IMR-90 (cell line): ENCODE measurements at regions of chr22 and their contacts with region 1.

Region 1: GRCh38 chr22:48492366-48493320 is 1335.0 kb downstream of the BRD1 start:
- DNase-seq: peak; percentile 57
- ATAC-seq: peak; percentile 92
- H3K4me3 ChIP-seq: no peak overlapping the region
- H3K27ac ChIP-seq: no peak overlapping the region
- H3K4me1 ChIP-seq: no peaks in the 10 kb centered on the region
- H3K27me3 ChIP-seq: peaks cover 24% of the 10 kb centered on the region; the same call in 1 of the 2 replicates
- CTCF ChIP-seq: peak; percentile 83
- POLR2A ChIP-seq: no peak
- RAD21 ChIP-seq: peak; percentile 85

Region 2: GRCh38 chr22:46563381-46564083 is 1929.1 kb before region 1 on chr22:
- CTCF ChIA-PET with region 1: no interaction called
- POLR2A ChIA-PET with region 1: no interaction called
- dilution Hi-C with region 1: no loop called
- in situ Hi-C with region 1: loop called (anchors 10 kb)
- intact Hi-C with region 1: no loop called
- DNase-seq: peak; percentile 37
- ATAC-seq: peak; percentile 88
- H3K4me3 ChIP-seq: no peak overlapping the region
- H3K27ac ChIP-seq: no peak overlapping the region
- H3K4me1 ChIP-seq: peaks cover 5% of the 10 kb centered on the region; the same call in 1 of the 2 replicates
- H3K27me3 ChIP-seq: peaks cover 1% of the 10 kb centered on the region; the same call in 1 of the 2 replicates
- CTCF ChIP-seq: peak; percentile 70
- POLR2A ChIP-seq: no peak
- RAD21 ChIP-seq: peak; percentile 72

Region 3: DNA sequence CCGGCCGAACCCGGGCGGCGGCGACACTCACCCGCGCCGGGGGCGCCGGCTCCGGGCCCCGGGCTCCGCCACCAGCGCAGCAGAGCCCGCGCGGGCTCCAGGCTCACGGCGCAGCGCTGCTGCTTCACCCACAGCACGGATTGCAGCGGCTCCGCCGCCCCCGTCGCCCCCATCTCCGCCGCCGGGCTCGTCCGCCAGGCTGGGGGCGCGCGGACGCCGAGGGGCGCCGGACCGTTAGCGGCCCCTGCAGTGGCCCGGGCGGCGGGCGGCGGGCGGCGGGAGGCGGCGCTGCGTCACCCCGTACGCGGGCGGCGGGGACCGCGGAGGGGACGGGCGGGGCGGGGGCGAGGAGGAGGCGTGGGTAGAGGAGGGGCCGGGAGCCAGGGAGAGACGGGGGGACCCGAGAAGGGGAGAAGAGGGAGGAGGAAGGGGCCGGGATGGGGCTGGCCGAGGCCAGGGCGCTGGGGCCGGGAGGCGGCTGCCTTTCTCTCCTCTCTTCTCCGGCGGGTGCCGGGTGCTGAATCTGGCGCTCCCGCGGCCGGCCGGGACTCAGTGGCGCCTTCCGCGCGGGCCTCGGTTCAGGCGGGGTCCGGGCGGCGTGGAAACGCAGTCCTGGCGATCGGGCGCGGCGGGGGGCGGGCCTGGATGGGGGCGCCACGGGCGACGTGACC is 1754.5 kb before region 1 on chr22 and contains the start of gene CERK:
- CTCF ChIA-PET with region 1: no interaction called
- POLR2A ChIA-PET with region 1: no interaction called
- dilution Hi-C with region 1: no loop called
- in situ Hi-C with region 1: no loop called
- intact Hi-C with region 1: loop called (anchors 5 kb)
- DNase-seq: peak; percentile 62
- ATAC-seq: peak; percentile 89
- H3K4me3 ChIP-seq: peak within 1 kb of the TSS; percentile 94
- H3K27ac ChIP-seq: peak within 1 kb of the TSS; percentile 55
- H3K4me1 ChIP-seq: peaks cover 31% of the 10 kb centered on the region
- H3K27me3 ChIP-seq: no peaks in the 10 kb centered on the region
- CTCF ChIP-seq: no peak
- POLR2A ChIP-seq: peak; percentile 63
- RAD21 ChIP-seq: no peak
- total RNA-seq, gene CERK: 38.7 and 44.4 TPM in 2 replicates

Region 4: GRCh38 chr22:46798366-46799350 is 1694.0 kb before region 1 on chr22:
- CTCF ChIA-PET with region 1: interaction called, 4 read pairs
- POLR2A ChIA-PET with region 1: no interaction called
- dilution Hi-C with region 1: no loop called
- in situ Hi-C with region 1: loop called (anchors 5 kb)
- intact Hi-C with region 1: no loop called
- DNase-seq: peak; percentile 66
- ATAC-seq: peak; percentile 98
- H3K4me3 ChIP-seq: no peak overlapping the region
- H3K27ac ChIP-seq: no peak overlapping the region
- H3K4me1 ChIP-seq: peaks cover 6% of the 10 kb centered on the region; the same call in 1 of the 2 replicates
- H3K27me3 ChIP-seq: no peaks in the 10 kb centered on the region
- CTCF ChIP-seq: peak; percentile 92
- POLR2A ChIP-seq: no peak
- RAD21 ChIP-seq: peak; percentile 98

Region 5: DNA sequence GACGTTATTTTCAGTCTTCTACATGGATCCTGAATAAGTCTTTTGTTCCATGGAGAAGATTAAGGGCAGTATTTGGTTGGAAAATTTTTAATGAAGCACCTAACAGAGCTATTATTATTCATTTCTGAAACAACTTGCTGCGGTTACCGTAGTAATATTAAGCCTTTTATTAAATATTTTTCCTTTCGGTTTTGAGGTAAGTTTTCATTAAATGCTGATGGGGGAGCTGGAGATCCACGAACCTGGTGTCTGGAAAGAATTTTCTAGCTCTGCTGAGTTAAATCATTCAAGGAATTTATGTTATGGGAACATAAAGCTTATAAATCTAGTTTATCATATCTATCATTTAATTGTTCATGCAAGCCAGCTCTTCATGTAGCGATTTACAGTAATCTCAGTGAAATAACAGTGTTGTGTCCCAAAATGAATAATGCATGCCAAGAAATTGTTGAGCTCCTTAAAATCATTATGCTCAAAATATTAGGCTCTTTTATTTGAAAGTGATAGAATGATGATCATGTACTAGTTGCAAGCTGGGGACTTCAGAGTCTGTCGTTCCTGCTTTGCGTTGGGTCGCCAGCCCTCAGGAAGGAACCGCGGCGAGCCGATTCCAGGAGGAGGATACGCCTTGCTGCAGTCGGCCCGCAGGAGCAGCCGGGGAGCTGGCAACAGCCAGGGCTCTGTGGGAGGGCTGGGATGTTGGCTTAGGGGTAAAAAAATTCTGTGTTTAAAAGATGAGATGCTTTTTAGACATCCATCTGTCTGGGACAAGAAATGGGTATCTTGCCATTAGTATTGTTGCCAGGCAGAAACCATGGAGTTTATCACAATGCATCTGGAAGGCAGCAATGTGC is 1647.1 kb before region 1 on chr22:
- CTCF ChIA-PET with region 1: no interaction called
- POLR2A ChIA-PET with region 1: no interaction called
- dilution Hi-C with region 1: no loop called
- in situ Hi-C with region 1: no loop called
- intact Hi-C with region 1: loop called (anchors 1 kb)
- DNase-seq: peak; percentile 63
- ATAC-seq: peak; percentile 15
- H3K4me3 ChIP-seq: no peak overlapping the region
- H3K27ac ChIP-seq: no peak overlapping the region
- H3K4me1 ChIP-seq: peaks cover 16% of the 10 kb centered on the region
- H3K27me3 ChIP-seq: no peaks in the 10 kb centered on the region
- CTCF ChIP-seq: peak; percentile 80
- POLR2A ChIP-seq: no peak
- RAD21 ChIP-seq: peak; percentile 83

Region 6: DNA sequence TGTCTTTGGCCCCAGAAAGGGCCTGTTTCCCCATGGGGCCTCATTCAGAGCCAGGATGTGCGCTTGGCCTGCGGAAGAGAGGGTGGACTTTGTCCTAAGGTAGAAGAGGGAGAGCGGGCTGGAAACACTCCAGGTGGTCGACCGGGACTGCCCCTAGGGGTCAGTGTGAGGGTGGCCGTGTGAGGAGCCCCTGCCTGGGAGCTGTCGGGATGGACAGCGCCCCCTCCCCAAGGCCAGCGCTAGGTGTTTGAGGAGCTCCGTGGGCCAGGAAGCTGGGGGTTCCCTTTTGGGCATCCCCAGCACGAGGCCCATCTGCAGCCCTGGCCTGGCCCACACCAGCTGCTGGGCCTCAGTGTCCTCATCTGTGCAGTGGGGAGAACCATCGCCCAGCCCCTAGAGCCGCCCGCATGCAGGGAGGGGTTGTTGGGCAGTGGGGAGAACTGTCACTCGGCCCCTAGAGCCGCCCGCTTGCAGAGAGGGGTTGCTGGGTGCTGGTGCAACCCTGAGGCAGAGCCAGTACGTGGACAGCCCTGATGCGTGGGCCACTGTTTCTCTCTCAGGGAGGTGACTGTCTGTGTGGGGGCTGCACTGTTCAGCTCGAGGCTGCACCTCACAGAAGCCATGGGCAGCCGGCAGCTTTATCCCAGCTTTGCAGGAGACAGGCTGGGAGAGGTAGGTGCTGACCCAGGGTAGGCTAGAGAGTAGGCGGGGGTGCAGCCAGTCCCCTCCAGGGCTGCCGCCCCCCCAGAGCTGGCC is 15.1 kb after region 1 on chr22:
- CTCF ChIA-PET with region 1: no interaction called
- POLR2A ChIA-PET with region 1: no interaction called
- dilution Hi-C with region 1: no loop called
- in situ Hi-C with region 1: no loop called
- intact Hi-C with region 1: no loop called
- DNase-seq: no peak
- ATAC-seq: no peak
- H3K4me3 ChIP-seq: no peak overlapping the region
- H3K27ac ChIP-seq: no peak overlapping the region
- H3K4me1 ChIP-seq: no peaks in the 10 kb centered on the region
- H3K27me3 ChIP-seq: no peaks in the 10 kb centered on the region
- CTCF ChIP-seq: no peak
- POLR2A ChIP-seq: no peak
- RAD21 ChIP-seq: no peak